WTC11 (cell line): ENCODE measurements at regions of chr6 and their contacts with region 1.

Region 1: GRCh38 chr6:149190224-149190831 is 127.2 kb upstream of the TAB2 start:
- DNase-seq: peak; percentile 80
- ATAC-seq: peak; percentile 98
- H3K4me3 Mint-ChIP-seq: no peak overlapping the region
- H3K27ac Mint-ChIP-seq: no peak overlapping the region
- H3K4me1 Mint-ChIP-seq: no peaks in the 10 kb centered on the region
- H3K27me3 Mint-ChIP-seq: no peaks in the 10 kb centered on the region; the same call in none of the 2 replicates
- CTCF ChIP-seq: peak; percentile 24; the same call in 1 of the 2 replicates

Region 2: GRCh38 chr6:149129371-149130077 is 60.8 kb before region 1 on chr6:
- CTCF ChIA-PET with region 1: no interaction called
- POLR2A ChIA-PET with region 1: no interaction called
- DNase-seq: no peak
- ATAC-seq: no peak
- H3K4me3 Mint-ChIP-seq: no peak overlapping the region
- H3K27ac Mint-ChIP-seq: no peak overlapping the region
- H3K4me1 Mint-ChIP-seq: no peaks in the 10 kb centered on the region
- H3K27me3 Mint-ChIP-seq: peaks cover 5% of the 10 kb centered on the region; the same call in 1 of the 2 replicates
- CTCF ChIP-seq: no peak

Region 3: GRCh38 chr6:149200276-149200938 is 10.1 kb after region 1 on chr6:
- CTCF ChIA-PET with region 1: interaction called, 12 read pairs
- POLR2A ChIA-PET with region 1: no interaction called
- DNase-seq: no peak
- ATAC-seq: 0 out of 2 replicates have a peak, but pooled peaks have one; percentile 38
- H3K4me3 Mint-ChIP-seq: no peak overlapping the region
- H3K27ac Mint-ChIP-seq: no peak overlapping the region
- H3K4me1 Mint-ChIP-seq: peaks cover 10% of the 10 kb centered on the region
- H3K27me3 Mint-ChIP-seq: no peaks in the 10 kb centered on the region
- CTCF ChIP-seq: no peak

Region 4: DNA sequence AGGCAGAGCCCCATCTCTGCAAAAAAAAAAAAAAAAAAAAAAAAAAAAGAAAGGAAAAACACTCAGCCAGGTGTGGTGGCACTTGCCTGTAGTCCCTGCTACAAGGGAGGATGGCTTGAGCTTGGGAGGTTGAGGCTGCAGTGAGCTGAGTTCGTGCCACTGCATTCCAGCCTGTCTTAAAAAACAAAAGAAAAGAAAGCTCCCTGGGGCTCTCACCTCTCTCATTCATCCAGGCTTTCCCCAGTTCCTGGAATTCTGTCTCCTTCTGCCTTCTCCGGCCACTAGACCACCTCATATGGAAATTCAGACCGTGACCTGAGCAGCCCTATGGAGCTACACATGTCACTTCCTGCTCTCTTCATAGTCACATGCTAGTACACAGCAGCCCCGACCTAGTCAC is 26.1 kb after region 1 on chr6:
- CTCF ChIA-PET with region 1: interaction called, 14 read pairs
- POLR2A ChIA-PET with region 1: no interaction called
- DNase-seq: no peak
- ATAC-seq: peak; percentile 90
- H3K4me3 Mint-ChIP-seq: no peak overlapping the region
- H3K27ac Mint-ChIP-seq: peak overlapping the region; percentile 62
- H3K4me1 Mint-ChIP-seq: peaks cover 10% of the 10 kb centered on the region
- H3K27me3 Mint-ChIP-seq: no peaks in the 10 kb centered on the region
- CTCF ChIP-seq: no peak